ENCODE measurements at regions of chr2 and their contacts with region 1.

Region 1: DNA sequence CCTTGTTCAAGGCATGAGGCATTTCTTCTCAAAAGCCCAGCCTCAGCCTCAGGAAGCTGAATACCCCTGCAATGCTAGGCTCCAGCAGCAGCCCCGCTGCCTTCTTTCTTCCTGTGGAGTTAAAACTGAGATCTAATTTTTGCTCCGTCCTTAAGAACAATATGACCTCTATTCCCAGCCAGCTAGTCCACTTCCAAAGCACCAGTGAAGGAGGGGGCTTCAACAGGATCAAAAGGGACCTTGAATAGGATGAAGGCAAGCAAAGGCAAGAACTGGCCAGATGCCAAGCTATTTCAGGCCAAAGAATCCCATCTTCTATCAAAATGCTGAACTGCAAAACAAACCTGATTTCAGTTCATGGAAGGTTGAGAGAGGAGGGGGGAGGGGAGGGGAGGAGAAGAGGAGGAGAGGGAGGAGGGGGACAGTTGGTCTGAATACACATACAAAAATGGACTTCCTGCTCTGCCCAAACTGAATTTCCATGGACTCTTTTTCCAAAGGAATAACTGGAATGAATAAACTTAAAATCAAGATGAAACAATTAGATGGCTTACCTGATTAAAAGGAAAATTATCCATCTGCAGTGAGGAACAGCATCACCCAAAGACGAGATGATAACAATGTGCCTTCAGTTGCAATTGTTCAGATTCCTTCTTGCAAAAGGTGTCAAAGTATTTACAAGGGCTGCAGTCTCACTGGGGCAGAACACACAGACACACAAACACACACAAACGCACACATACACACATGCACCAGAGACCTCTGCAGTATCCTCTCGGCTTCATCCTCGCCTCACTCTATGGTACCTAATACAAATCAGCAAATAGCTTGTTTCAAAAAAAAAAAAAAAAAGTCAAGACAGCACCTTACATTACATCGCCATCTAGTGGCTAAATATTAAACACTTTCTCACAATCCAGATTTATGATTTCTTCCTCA is at the start of gene SCN1A:
- DNase-seq: no peak
- H3K4me3 ChIP-seq: no peak within 1 kb of the TSS
- H3K27ac ChIP-seq: no peak within 1 kb of the TSS
- H3K4me1 ChIP-seq: peaks cover 0 to 6% (median 5%) of the 10 kb centered on the region in 4 experiments; a peak in 3 of 7 replicates
- H3K27me3 ChIP-seq: no peaks in the 10 kb centered on the region
- CTCF ChIP-seq: peak in 2 of 3 experiments; percentile 39 to 54; a peak in 2 of 4 replicates
- EP300 ChIP-seq: no peak
- POLR2A ChIP-seq: no peak
- RAD21 ChIP-seq: peak; percentile 66 to 72
- total RNA-seq, gene SCN1A: 1.3 and 1.9 TPM in 2 replicates

Region 2: GRCh38 chr2:165953655-165954606 is 173.6 kb before region 1 on chr2 and contains the start of gene TTC21B:
- CTCF ChIA-PET with region 1: interaction called, 27 read pairs
- POLR2A ChIA-PET with region 1: interaction called, 3 read pairs
- DNase-seq: peak; percentile 80 to 94
- H3K4me3 ChIP-seq: peak within 1 kb of the TSS; percentile 69 to 87 (median 74)
- H3K27ac ChIP-seq: peak within 1 kb of the TSS; percentile 90
- H3K4me1 ChIP-seq: peaks cover 0 to 2% (median 0%) of the 10 kb centered on the region in 4 experiments; a peak in 2 of 7 replicates
- H3K27me3 ChIP-seq: no peaks in the 10 kb centered on the region
- CTCF ChIP-seq: peak; percentile 53 to 85 (median 72)
- EP300 ChIP-seq: peak in 1 of 2 experiments; percentile 10; a peak in 1 of 3 replicates
- POLR2A ChIP-seq: peak in 1 of 2 experiments; percentile 66; a peak in 2 of 3 replicates
- RAD21 ChIP-seq: peak; percentile 57
- total RNA-seq, gene TTC21B: 20.8 and 23.9 TPM in 2 replicates

Region 3: GRCh38 chr2:166067229-166067628 is 60.3 kb before region 1 on chr2:
- CTCF ChIA-PET with region 1: interaction called, 71 read pairs
- POLR2A ChIA-PET with region 1: no interaction called
- DNase-seq: no peak
- H3K4me3 ChIP-seq: no peak overlapping the region
- H3K27ac ChIP-seq: no peak overlapping the region
- H3K4me1 ChIP-seq: no peaks in the 10 kb centered on the region
- H3K27me3 ChIP-seq: no peaks in the 10 kb centered on the region
- CTCF ChIP-seq: no peak
- EP300 ChIP-seq: no peak
- POLR2A ChIP-seq: no peak
- RAD21 ChIP-seq: no peak

Region 4: DNA sequence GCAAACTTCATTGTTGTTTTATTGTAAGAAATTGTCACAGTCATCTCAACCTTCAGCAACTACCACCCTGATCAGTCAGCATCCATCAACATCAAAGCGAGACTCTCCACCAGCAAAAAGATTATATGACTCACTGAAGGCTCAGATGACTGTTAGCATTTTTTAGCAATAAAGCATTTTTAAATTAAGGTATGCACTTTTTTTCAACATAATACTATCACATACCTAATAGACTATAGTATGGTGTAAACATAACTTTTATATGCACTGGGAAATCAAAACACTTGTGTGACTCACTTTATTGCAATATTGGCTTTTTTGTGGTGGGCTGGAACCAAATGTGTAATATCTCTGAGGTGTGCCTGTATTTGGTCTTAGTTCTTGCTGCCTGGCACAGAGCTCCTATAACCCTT is 15.3 kb before region 1 on chr2:
- CTCF ChIA-PET with region 1: interaction called, 13 read pairs
- POLR2A ChIA-PET with region 1: interaction called, 3 read pairs
- DNase-seq: no peak
- H3K4me3 ChIP-seq: no peak overlapping the region
- H3K27ac ChIP-seq: no peak overlapping the region
- H3K4me1 ChIP-seq: no peaks in the 10 kb centered on the region
- H3K27me3 ChIP-seq: no peaks in the 10 kb centered on the region
- CTCF ChIP-seq: no peak
- EP300 ChIP-seq: no peak
- POLR2A ChIP-seq: no peak
- RAD21 ChIP-seq: no peak

Region 5: DNA sequence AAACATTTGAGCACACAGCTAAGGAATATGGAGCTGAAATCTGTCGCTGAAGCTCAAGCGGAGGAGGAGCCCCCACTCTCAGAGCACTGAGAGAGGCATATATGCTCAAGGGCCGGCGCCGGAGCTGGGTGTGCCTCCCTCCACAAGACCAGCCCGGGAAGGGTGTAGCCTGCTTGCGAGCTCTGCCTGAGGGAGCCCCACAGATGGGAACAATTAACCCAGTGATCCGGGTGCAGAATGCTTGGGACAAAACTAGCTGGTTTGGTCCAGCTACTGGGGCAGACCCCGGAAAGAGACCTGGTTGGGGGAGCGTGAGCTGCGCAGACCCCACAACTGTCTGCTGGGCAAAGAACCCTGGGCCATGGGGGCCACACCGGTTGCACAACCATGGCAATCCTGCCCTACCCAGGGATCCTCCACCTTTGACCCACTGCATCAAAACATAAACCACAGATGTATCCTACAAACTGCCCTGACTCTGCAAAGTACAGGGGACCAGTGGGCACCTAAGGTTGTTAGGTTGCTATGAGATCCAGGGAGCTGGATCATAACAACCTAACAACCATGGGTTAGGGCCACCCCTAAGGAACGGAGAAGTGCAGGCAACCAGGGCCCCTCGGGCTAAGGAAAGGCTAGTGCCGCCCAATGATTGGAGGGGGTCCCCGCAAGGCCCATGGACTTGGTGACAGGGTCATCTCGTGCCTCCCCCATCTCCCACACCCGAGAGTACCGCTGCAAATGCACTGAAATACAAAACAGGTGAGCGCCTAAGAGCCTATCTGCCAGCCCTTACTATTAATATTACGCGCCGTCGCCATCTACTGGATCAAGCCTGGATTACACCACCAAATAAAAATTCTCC is 53.7 kb after region 1 on chr2:
- CTCF ChIA-PET with region 1: interaction called, 12 read pairs
- POLR2A ChIA-PET with region 1: no interaction called
- DNase-seq: peak in 1 of 2 experiments; percentile 81
- H3K4me3 ChIP-seq: no peak overlapping the region
- H3K27ac ChIP-seq: no peak overlapping the region
- H3K4me1 ChIP-seq: peaks cover 0 to 4% (median 0%) of the 10 kb centered on the region in 4 experiments; a peak in 2 of 7 replicates
- H3K27me3 ChIP-seq: no peaks in the 10 kb centered on the region
- CTCF ChIP-seq: peak in 2 of 3 experiments; percentile 50 to 54; a peak in 3 of 4 replicates
- EP300 ChIP-seq: no peak
- POLR2A ChIP-seq: no peak
- RAD21 ChIP-seq: peak; percentile 53 to 67